ENCODE measurements at regions of chr13 and their contacts with region 1.

Region 1: GRCh38 chr13:42969558-42970172 is 22.4 kb downstream of the EPSTI1 start:
- DNase-seq: peak; percentile 77
- H3K4me3 ChIP-seq: no peak overlapping the region
- H3K27ac ChIP-seq: no peak overlapping the region
- H3K4me1 ChIP-seq: no peaks in the 10 kb centered on the region
- CTCF ChIP-seq: peak; percentile 93

Region 2: GRCh38 chr13:42594970-42595571 is 374.6 kb before region 1 on chr13:
- CTCF ChIA-PET with region 1: no interaction called
- POLR2A ChIA-PET with region 1: no interaction called
- intact Hi-C with region 1: loop called (anchors 5 kb)
- DNase-seq: peak; percentile 71
- H3K4me3 ChIP-seq: no peak overlapping the region
- H3K27ac ChIP-seq: no peak overlapping the region
- H3K4me1 ChIP-seq: peaks cover 4% of the 10 kb centered on the region
- CTCF ChIP-seq: peak; percentile 97

Region 3: GRCh38 chr13:43006893-43007631 is 37.4 kb after region 1 on chr13:
- CTCF ChIA-PET with region 1: no interaction called
- POLR2A ChIA-PET with region 1: no interaction called
- intact Hi-C with region 1: no loop called
- DNase-seq: no peak
- H3K4me3 ChIP-seq: no peak overlapping the region
- H3K27ac ChIP-seq: no peak overlapping the region
- H3K4me1 ChIP-seq: no peaks in the 10 kb centered on the region
- CTCF ChIP-seq: no peak

Region 4: DNA sequence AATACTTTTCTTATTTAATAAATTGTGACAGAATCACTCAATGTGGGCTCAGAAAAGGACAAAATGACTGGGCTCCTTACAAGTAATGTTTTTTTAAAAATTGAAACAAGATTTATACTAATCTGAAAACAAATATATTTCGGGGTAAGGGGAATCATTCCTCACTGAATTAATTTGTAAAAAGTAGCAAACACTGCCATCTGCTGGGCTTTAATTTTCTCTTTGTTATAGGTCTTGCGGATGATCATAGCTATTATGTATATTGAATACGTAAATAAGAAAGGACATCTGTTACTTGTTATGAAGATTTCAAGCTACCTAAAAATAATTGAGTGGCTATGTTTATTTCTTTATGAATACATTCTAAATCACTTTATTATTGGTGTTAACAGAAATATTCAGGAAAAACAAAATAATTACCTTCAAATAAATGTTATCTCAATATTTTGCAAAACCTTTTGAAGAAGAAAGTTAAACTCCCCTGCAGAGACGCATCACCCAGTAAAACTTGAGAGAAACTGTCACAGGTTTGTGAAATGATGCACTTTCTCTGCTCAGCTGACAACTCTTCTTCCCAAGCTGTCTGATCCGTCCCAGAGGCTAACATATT is 834.9 kb after region 1 on chr13:
- CTCF ChIA-PET with region 1: no interaction called
- POLR2A ChIA-PET with region 1: no interaction called
- intact Hi-C with region 1: loop called (anchors 5 kb)
- DNase-seq: peak; percentile 61
- H3K4me3 ChIP-seq: no peak overlapping the region
- H3K27ac ChIP-seq: no peak overlapping the region
- H3K4me1 ChIP-seq: no peaks in the 10 kb centered on the region
- CTCF ChIP-seq: peak; percentile 88

Region 5: GRCh38 chr13:43865892-43866291 is 896.2 kb after region 1 on chr13:
- CTCF ChIA-PET with region 1: no interaction called
- POLR2A ChIA-PET with region 1: no interaction called
- intact Hi-C with region 1: loop called (anchors 5 kb)
- DNase-seq: no peak
- H3K4me3 ChIP-seq: no peak overlapping the region
- H3K27ac ChIP-seq: no peak overlapping the region
- H3K4me1 ChIP-seq: no peaks in the 10 kb centered on the region
- CTCF ChIP-seq: no peak

Measured in OCI-LY7 (cell line).